ENCODE measurements at regions of chr5 and their contacts with region 1.

Region 1: GRCh38 chr5:58460732-58461286 is 923 bp upstream of the PLK2 start:
- DNase-seq: peak; percentile 89 to 97
- ATAC-seq: peak; percentile 72

Region 2: GRCh38 chr5:57298295-57298984 is 1162.4 kb before region 1 on chr5:
- intact Hi-C with region 1: loop called (anchors 2 to 10 kb)
- DNase-seq: peak; percentile 82 to 93
- ATAC-seq: peak; percentile 89

Region 3: GRCh38 chr5:57779383-57780223 is 681.2 kb before region 1 on chr5:
- intact Hi-C with region 1: loop called (anchors 2 to 10 kb)
- DNase-seq: no peak
- ATAC-seq: peak; percentile 80

Region 4: GRCh38 chr5:57887851-57888621 is 572.8 kb before region 1 on chr5:
- intact Hi-C with region 1: loop called in 1 of 2 experiments (anchors 5 kb)
- DNase-seq: peak; percentile 34
- ATAC-seq: peak; percentile 100

Measured in left colon (tissue), 2 donors.